GM12878 (cell line): ENCODE measurements at regions of chr11 and their contacts with region 1.

Region 1: GRCh38 chr11:126310228-126310991 is 6.5 kb downstream of the DCPS start:
- DNase-seq: no peak
- ATAC-seq: peak; percentile 74
- H3K4me3 ChIP-seq: no peak overlapping the region
- H3K27ac ChIP-seq: no peak overlapping the region
- H3K4me1 ChIP-seq: peaks cover 44% of the 10 kb centered on the region
- H3K27me3 ChIP-seq: no peaks in the 10 kb centered on the region
- CTCF ChIP-seq: peak; percentile 76 to 95 (median 89); a peak in 5 of 6 replicates
- EP300 ChIP-seq: no peak
- POLR2A ChIP-seq: no peak
- RAD21 ChIP-seq: peak; percentile 89

Region 2: DNA sequence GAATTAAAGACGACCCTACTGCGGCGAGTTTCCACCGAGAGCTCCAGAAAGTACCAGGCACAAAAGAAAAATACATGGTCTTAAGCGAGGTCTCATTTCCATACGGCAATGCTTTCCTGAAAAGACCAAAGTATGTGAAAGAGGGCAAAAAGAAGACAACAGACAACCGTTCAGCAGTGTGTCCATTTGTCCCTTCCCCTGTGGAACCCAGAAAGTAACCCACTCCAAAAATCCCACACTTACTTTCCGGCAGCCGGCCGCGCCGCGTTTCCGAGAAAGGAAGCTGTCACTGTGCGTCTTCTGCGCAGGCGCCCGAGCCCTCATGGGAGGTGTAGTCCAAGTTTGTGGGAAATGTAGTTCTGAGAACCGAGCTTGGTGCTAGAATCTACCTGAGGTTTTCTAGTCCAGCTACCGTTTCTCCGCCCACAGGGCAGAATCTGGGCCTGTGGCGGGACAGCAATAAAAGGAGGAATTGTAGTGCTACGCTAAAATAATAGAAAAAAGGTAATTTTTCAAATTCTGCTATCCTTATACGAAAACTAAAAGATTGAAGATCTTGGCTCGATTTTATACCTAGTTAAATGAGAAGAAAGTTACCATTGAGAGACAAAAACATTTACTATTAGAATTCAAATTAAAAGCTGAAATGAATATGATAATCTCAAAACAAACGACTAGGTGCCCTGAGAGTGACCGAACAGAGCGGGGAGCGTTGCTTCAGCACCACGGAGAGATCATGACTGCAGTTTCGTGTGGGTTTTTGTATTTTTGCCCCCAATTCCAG is 407.3 kb before region 1 on chr11 and contains the start of gene PUS3:
- CTCF ChIA-PET with region 1: no interaction called
- POLR2A ChIA-PET with region 1: no interaction called
- RAD21 ChIA-PET with region 1: no interaction called
- SMC1A ChIA-PET with region 1: no interaction called
- in situ Hi-C with region 1: no loop called
- intact Hi-C with region 1: no loop called
- DNase-seq: peak; percentile 52
- ATAC-seq: peak; percentile 99
- H3K4me3 ChIP-seq: peak within 1 kb of the TSS; percentile 84
- H3K27ac ChIP-seq: peak within 1 kb of the TSS; percentile 64
- H3K4me1 ChIP-seq: peaks cover 4% of the 10 kb centered on the region; the same call in 1 of the 2 replicates
- H3K27me3 ChIP-seq: peaks cover 3 to 6% of the 10 kb centered on the region in 2 experiments; a peak in 3 of 4 replicates
- CTCF ChIP-seq: no peak
- EP300 ChIP-seq: no peak
- POLR2A ChIP-seq: peak; percentile 76
- RAD21 ChIP-seq: no peak
- polyA plus RNA-seq, gene PUS3: 19.2 to 20.3 TPM

Region 3: GRCh38 chr11:125923012-125923579 is 387.3 kb before region 1 on chr11:
- CTCF ChIA-PET with region 1: no interaction called
- POLR2A ChIA-PET with region 1: no interaction called
- RAD21 ChIA-PET with region 1: no interaction called
- SMC1A ChIA-PET with region 1: no interaction called
- in situ Hi-C with region 1: no loop called
- intact Hi-C with region 1: loop called (anchors 10 kb)
- DNase-seq: peak; percentile 37
- ATAC-seq: peak; percentile 97
- H3K4me3 ChIP-seq: no peak overlapping the region
- H3K27ac ChIP-seq: no peak overlapping the region
- H3K4me1 ChIP-seq: no peaks in the 10 kb centered on the region
- H3K27me3 ChIP-seq: no peaks in the 10 kb centered on the region
- CTCF ChIP-seq: peak; percentile 83 to 89 (median 85)
- EP300 ChIP-seq: no peak
- POLR2A ChIP-seq: no peak
- RAD21 ChIP-seq: peak; percentile 89

Region 4: DNA sequence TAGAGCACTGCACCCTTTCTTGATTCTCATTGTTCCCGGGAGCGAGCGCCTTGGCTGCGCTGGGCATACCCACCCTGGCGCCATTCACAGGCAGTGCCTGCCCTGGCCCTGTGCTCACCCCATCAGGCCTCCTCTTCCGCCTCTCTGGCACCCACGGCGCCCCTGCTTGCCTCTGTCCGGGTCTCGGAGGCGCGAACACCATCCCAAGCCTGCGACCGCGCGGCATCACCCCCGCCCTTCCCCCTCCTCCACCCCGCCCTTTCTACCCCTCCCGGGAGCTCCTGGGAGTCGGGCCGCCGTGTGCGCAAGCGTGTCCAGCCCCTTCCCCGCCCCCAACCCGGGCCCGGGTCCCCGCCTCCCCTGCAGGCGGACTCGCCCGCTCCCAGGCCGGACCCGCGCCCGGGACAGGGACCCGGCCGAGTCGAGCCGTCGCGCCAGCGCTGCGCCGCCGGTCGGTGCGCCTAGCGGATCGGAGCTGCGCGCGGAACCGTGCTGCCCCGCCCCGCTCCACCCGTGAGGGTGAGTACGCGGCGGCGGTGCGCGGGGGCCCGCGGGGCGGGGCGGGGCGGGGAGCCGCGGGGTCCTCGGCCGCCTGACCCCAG is 45.0 kb after region 1 on chr11 and contains the start of gene ST3GAL4:
- CTCF ChIA-PET with region 1: interaction called, 22 read pairs
- POLR2A ChIA-PET with region 1: no interaction called
- RAD21 ChIA-PET with region 1: interaction called, 8 read pairs
- SMC1A ChIA-PET with region 1: interaction called, 14 read pairs
- in situ Hi-C with region 1: no loop called
- intact Hi-C with region 1: loop called (anchors 2 kb)
- DNase-seq: peak; percentile 11
- ATAC-seq: peak; percentile 79
- H3K4me3 ChIP-seq: peak within 1 kb of the TSS; percentile 73
- H3K27ac ChIP-seq: peak within 1 kb of the TSS; percentile 87
- H3K4me1 ChIP-seq: peaks cover 21% of the 10 kb centered on the region
- H3K27me3 ChIP-seq: no peaks in the 10 kb centered on the region
- CTCF ChIP-seq: no peak
- EP300 ChIP-seq: no peak
- POLR2A ChIP-seq: peak; percentile 69
- RAD21 ChIP-seq: no peak
- polyA plus RNA-seq, gene ST3GAL4: not detected

Region 5: GRCh38 chr11:126431401-126432064 is 121.1 kb after region 1 on chr11:
- CTCF ChIA-PET with region 1: interaction called, 16 read pairs
- POLR2A ChIA-PET with region 1: no interaction called
- RAD21 ChIA-PET with region 1: interaction called, 6 read pairs
- SMC1A ChIA-PET with region 1: interaction called, 5 read pairs
- in situ Hi-C with region 1: no loop called
- intact Hi-C with region 1: no loop called
- DNase-seq: no peak
- ATAC-seq: no peak
- H3K4me3 ChIP-seq: no peak overlapping the region
- H3K27ac ChIP-seq: no peak overlapping the region
- H3K4me1 ChIP-seq: peaks cover 9% of the 10 kb centered on the region; the same call in 1 of the 2 replicates
- H3K27me3 ChIP-seq: no peaks in the 10 kb centered on the region; a peak in 1 of 4 replicates
- CTCF ChIP-seq: no peak
- EP300 ChIP-seq: no peak
- POLR2A ChIP-seq: no peak
- RAD21 ChIP-seq: no peak

Region 6: DNA sequence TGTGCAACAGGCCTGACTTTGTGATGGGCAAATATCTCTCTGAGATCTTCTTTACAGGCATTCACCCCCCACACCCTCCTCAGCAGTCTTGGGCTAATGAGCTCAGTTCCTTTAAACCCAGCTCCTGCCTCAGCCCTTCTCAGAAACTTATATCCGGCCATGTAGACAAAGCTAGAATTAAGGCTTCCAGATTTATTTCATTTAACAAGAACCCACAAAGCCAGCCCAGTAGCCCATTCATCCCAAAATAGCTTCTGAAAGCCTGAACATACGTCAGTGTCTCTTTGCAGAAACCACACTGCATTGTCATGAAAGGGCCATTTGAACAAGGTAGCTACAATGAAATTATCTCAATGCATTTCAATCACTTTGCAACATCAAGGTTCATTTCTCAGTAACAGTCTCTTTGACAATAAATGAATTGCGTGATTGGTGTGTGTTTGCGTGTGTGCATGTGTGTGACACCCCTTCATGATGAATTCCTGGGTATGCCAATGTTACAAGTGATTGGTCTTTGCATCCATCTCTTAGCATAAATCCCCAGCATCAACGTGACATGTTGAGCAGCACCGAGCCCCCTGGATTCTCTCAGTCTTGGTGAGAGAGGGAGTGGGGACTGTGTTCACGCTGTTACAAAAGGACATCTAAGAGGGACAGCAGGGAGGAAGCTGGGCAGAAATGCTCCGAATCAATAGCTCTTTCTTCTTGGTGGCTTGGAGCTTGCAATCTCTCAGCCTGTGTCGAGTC is 390.5 kb after region 1 on chr11:
- CTCF ChIA-PET with region 1: no interaction called
- POLR2A ChIA-PET with region 1: no interaction called
- RAD21 ChIA-PET with region 1: no interaction called
- SMC1A ChIA-PET with region 1: no interaction called
- in situ Hi-C with region 1: no loop called
- intact Hi-C with region 1: loop called (anchors 10 kb)
- DNase-seq: peak; percentile 42
- ATAC-seq: peak; percentile 88
- H3K4me3 ChIP-seq: no peak overlapping the region
- H3K27ac ChIP-seq: no peak overlapping the region; the same call in 1 of the 2 replicates
- H3K4me1 ChIP-seq: peaks cover 16% of the 10 kb centered on the region
- H3K27me3 ChIP-seq: no peaks in the 10 kb centered on the region; a peak in 1 of 4 replicates
- CTCF ChIP-seq: no peak
- EP300 ChIP-seq: peak; percentile 94 to 96; a peak in 3 of 4 replicates
- POLR2A ChIP-seq: no peak
- RAD21 ChIP-seq: no peak